ENCODE measurements at regions of chr1 and their contacts with region 1.

Region 1: DNA sequence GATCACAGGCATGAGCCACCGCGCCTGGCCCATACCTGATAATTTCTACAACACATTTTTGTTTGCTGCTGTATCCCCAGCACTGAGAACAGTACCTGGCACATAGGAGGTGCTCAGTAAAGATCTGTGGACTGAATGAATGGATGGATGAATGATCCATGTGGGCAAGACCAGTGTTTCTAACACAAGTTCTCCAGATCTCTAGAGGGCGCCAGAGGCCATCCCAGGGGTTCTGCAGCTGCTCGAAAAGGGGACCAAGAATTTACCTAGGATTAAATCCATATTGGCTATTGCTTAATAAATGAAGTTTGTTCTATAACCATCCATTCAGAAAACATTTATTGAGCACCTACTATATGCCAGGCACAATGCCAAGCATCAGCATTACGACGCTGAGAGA is 167.7 kb downstream of the ACTL8 start:
- DNase-seq: peak; percentile 61
- H3K4me3 ChIP-seq: no peak overlapping the region
- H3K27ac ChIP-seq: no peak overlapping the region
- H3K4me1 ChIP-seq: no peaks in the 10 kb centered on the region
- CTCF ChIP-seq: peak; percentile 85

Region 2: GRCh38 chr1:17696417-17697301 is 226.2 kb before region 1 on chr1:
- CTCF ChIA-PET with region 1: no interaction called
- POLR2A ChIA-PET with region 1: no interaction called
- intact Hi-C with region 1: no loop called
- DNase-seq: no peak
- H3K4me3 ChIP-seq: no peak overlapping the region
- H3K27ac ChIP-seq: no peak overlapping the region
- H3K4me1 ChIP-seq: no peaks in the 10 kb centered on the region
- CTCF ChIP-seq: no peak

Region 3: GRCh38 chr1:17849216-17849615 is 73.6 kb before region 1 on chr1:
- CTCF ChIA-PET with region 1: no interaction called
- POLR2A ChIA-PET with region 1: no interaction called
- intact Hi-C with region 1: no loop called
- DNase-seq: no peak
- H3K4me3 ChIP-seq: no peak overlapping the region
- H3K27ac ChIP-seq: no peak overlapping the region
- H3K4me1 ChIP-seq: no peaks in the 10 kb centered on the region
- CTCF ChIP-seq: no peak

Region 4: GRCh38 chr1:18217398-18218043 is 294.7 kb after region 1 on chr1:
- CTCF ChIA-PET with region 1: no interaction called
- POLR2A ChIA-PET with region 1: no interaction called
- intact Hi-C with region 1: loop called (anchors 5 kb)
- DNase-seq: peak; percentile 67
- H3K4me3 ChIP-seq: no peak overlapping the region
- H3K27ac ChIP-seq: no peak overlapping the region
- H3K4me1 ChIP-seq: no peaks in the 10 kb centered on the region
- CTCF ChIP-seq: peak; percentile 83

Region 5: DNA sequence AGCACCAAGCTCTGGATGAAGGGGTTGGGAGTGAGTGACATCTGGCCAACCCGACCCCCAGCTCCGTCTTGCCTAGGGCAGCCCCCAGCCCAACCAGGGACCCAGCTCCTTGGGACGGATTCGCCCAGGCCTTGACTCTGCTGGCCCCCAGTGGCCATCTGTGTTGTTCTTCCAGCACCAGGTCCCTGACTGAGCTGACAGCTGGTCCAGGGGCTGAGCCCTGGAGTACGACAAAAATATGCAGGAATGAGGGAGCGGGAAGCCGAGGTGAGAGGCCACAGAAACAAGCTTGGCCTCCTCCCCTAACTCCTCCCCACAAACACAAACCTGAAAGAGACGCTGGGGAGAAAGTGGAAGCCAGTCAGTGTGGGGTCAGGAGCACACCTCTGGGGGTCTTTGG is 652.8 kb after region 1 on chr1:
- CTCF ChIA-PET with region 1: no interaction called
- POLR2A ChIA-PET with region 1: no interaction called
- intact Hi-C with region 1: loop called (anchors 5 kb)
- DNase-seq: peak; percentile 66
- H3K4me3 ChIP-seq: no peak overlapping the region
- H3K27ac ChIP-seq: no peak overlapping the region
- H3K4me1 ChIP-seq: peaks cover 22% of the 10 kb centered on the region
- CTCF ChIP-seq: peak; percentile 94